Dorsolateral prefrontal cortex (tissue), 120 donors: ENCODE measurements at regions of chr7 and their contacts with region 1.

Region 1: GRCh38 chr7:37181550-37181932 is 267.1 kb downstream of the ELMO1 start:
- DNase-seq: no peak
- H3K4me3 ChIP-seq: peak overlapping the region in 2 of 59 donors; percentile 22 to 23
- H3K27ac ChIP-seq: peak overlapping the region in 5 of 59 donors; percentile 1 to 67 (median 17)
- H3K27me3 ChIP-seq: no peaks in the 10 kb centered on the region
- CTCF ChIP-seq: no peak

Region 2: GRCh38 chr7:36487756-36488336 is 693.7 kb before region 1 on chr7:
- intact Hi-C with region 1: loop called (anchors 5 kb)
- DNase-seq: peak in 1 of 10 donors; percentile 26
- H3K4me3 ChIP-seq: no peak overlapping the region
- H3K27ac ChIP-seq: no peak overlapping the region
- H3K27me3 ChIP-seq: no peaks in the 10 kb centered on the region
- CTCF ChIP-seq: peak; percentile 41 to 95 (median 83)

Region 3: DNA sequence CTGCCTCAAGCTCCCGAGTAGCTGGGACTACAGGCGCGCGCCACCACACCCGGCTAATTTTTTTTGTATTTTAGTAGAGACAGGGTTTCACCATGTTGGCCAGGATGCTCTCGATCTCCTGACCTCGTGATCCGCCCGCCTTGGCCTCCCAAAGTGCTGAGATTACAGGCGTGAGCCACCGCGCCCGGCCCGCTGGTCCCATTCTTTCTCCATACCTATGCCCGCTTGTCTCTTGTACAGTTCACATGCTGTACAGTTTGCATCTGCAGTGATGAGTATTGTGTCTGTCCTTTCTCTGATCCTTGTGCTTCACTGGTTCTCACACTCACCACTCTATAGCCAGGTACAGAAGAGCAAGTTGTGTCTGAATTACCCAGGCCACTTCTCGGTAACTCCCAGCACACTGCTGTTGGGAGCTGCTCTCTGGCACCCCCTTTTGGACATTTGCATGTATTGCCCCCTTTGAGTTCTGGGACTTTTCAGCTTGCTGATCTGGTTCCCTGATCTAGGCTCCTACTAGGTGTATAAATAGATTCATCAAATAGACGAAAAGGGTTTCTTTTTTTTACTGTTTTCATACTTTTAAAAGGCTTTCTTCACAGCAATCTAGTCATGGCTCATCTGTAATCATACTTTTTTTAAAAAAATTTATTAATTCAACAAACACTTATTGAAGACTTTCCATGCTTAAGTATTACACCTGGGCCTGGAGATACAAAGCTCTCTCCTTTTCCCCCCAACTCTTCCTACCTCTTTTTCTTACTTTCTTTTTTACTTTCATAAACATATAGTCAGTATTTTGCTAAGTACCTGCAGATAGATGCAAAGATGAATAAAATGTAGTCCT is 510.7 kb before region 1 on chr7:
- intact Hi-C with region 1: loop called in 1 of 2 experiments (anchors 5 kb)
- DNase-seq: peak in 9 of 10 donors; percentile 23 to 60 (median 49)
- H3K4me3 ChIP-seq: no peak overlapping the region
- H3K27ac ChIP-seq: no peak overlapping the region
- H3K27me3 ChIP-seq: no peaks in the 10 kb centered on the region
- CTCF ChIP-seq: peak; percentile 56 to 90 (median 84)

Region 4: GRCh38 chr7:36686499-36686898 is 495.0 kb before region 1 on chr7:
- intact Hi-C with region 1: loop called in 1 of 2 experiments (anchors 5 kb)
- DNase-seq: peak in 4 of 10 donors; percentile 8 to 70 (median 38)
- H3K4me3 ChIP-seq: no peak overlapping the region
- H3K27ac ChIP-seq: no peak overlapping the region
- H3K27me3 ChIP-seq: no peaks in the 10 kb centered on the region
- CTCF ChIP-seq: no peak

Region 5: DNA sequence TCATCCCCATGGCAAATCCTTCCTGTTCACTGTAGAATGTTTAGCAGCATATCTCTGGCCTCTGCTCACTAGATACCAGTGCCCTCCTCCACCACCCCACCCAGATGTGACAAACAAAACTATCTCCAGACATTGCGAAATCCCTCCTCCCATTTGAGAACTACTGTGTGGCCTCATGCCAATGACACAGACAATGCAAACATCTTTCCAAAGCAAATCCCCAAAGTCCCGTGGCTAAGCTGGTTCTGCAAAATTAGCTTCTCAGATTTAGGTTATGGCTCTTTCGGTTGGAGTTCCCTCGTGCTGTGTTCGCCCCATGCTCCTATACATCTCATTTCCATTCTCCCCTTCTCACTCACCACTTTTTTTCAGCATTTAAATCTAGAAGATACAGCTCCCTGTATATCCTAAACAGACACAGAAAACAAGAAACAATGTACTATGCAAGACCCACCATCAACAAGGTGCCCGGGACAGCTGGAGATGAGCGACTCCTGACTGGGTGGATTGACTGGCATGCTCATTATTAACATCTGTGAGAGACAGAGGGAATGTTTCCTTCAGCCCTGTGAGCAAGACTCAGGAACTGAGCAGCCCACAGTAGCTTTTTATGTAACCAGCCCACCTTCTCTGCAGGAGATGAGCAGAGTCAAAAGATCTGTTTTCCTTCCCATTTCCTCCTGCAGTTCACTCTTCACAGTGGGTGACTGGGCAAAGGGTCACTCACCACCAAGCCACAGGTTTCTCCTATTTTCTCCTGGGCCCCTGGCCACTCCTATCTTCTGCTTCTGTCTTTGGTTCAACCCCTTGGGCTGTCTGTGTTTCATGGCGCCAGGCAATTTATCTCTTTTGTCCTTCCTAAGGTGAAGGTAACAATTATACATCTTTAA is 231.6 kb before region 1 on chr7:
- intact Hi-C with region 1: no loop called
- DNase-seq: no peak
- H3K4me3 ChIP-seq: no peak overlapping the region
- H3K27ac ChIP-seq: peak overlapping the region in 55 of 59 donors; percentile 3 to 76 (median 55)
- H3K27me3 ChIP-seq: no peaks in the 10 kb centered on the region
- CTCF ChIP-seq: no peak

Region 6: GRCh38 chr7:36967387-36967786 is 214.2 kb before region 1 on chr7:
- intact Hi-C with region 1: loop called in 1 of 2 experiments (anchors 5 kb)
- DNase-seq: peak in 5 of 10 donors; percentile 50 to 71 (median 58)
- H3K4me3 ChIP-seq: no peak overlapping the region
- H3K27ac ChIP-seq: peak overlapping the region in 17 of 59 donors; percentile 2 to 59 (median 18)
- H3K27me3 ChIP-seq: no peaks in the 10 kb centered on the region
- CTCF ChIP-seq: peak; percentile 64 to 89 (median 82)

Region 7: GRCh38 chr7:36986429-36987362 is 194.8 kb before region 1 on chr7:
- intact Hi-C with region 1: loop called (anchors 2 to 5 kb)
- DNase-seq: peak; percentile 59 to 89 (median 76)
- H3K4me3 ChIP-seq: peak overlapping the region in 58 of 59 donors; percentile 3 to 70 (median 55)
- H3K27ac ChIP-seq: peak overlapping the region in 51 of 59 donors; percentile 5 to 85 (median 62)
- H3K27me3 ChIP-seq: no peaks in the 10 kb centered on the region
- CTCF ChIP-seq: peak; percentile 44 to 97 (median 86)

Region 8: GRCh38 chr7:37275078-37275710 is 93.7 kb after region 1 on chr7:
- intact Hi-C with region 1: no loop called
- DNase-seq: no peak
- H3K4me3 ChIP-seq: no peak overlapping the region
- H3K27ac ChIP-seq: peak overlapping the region in 58 of 59 donors; percentile 67 to 100 (median 98)
- H3K27me3 ChIP-seq: no peaks in the 10 kb centered on the region
- CTCF ChIP-seq: no peak

Region 9: DNA sequence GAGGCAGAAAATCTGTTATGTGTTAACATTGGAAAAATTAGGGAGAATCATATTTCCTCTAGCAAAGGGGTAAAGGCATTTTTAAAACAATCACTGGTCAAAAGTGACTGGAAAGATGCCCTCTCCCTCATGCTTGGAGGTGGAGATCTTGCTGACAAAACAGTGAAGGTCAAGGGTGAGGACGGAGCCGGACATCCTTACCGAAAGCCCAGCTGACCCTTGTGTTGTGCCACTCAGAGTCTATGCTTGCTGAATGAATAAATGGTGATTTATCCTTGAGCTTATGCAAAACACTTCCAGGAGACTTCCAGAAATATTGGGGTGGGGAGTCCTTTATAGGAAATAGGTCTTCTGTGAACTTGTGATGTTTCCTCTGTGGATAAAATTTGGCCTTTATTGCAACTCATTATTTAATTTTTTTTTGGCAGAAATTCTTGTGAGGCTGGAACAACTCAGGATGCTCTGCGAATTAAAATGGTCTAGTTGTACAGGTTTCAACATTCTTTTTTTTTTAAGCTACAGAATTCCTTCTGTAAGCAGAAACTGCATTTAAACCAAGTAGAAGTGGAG is 295.4 kb after region 1 on chr7:
- intact Hi-C with region 1: no loop called
- DNase-seq: no peak
- H3K4me3 ChIP-seq: peak overlapping the region in 1 of 59 donors; percentile 28
- H3K27ac ChIP-seq: peak overlapping the region in 21 of 59 donors; percentile 3 to 79 (median 33)
- H3K27me3 ChIP-seq: peaks cover 0 to 4% (median 0%) of the 10 kb centered on the region in 45 donors
- CTCF ChIP-seq: no peak